GM23248 (cell line): ENCODE measurements at regions of chr3 and their contacts with region 1.

Region 1: GRCh38 chr3:120404876-120405275 is 45.9 kb downstream of the FSTL1 start:
- DNase-seq: peak; percentile 60
- H3K4me3 ChIP-seq: no peak overlapping the region
- H3K27ac ChIP-seq: peak overlapping the region; percentile 33
- H3K4me1 ChIP-seq: no peaks in the 10 kb centered on the region
- H3K27me3 ChIP-seq: no peaks in the 10 kb centered on the region

Region 2: GRCh38 chr3:120245386-120245785 is 159.5 kb before region 1 on chr3:
- in situ Hi-C with region 1: loop called (anchors 10 kb)
- DNase-seq: no peak
- H3K4me3 ChIP-seq: no peak overlapping the region
- H3K27ac ChIP-seq: no peak overlapping the region
- H3K4me1 ChIP-seq: no peaks in the 10 kb centered on the region
- H3K27me3 ChIP-seq: no peaks in the 10 kb centered on the region

Region 3: GRCh38 chr3:121781611-121782010 is 1376.7 kb after region 1 on chr3:
- in situ Hi-C with region 1: no loop called
- DNase-seq: no peak
- H3K4me3 ChIP-seq: no peak overlapping the region
- H3K27ac ChIP-seq: no peak overlapping the region
- H3K4me1 ChIP-seq: no peaks in the 10 kb centered on the region
- H3K27me3 ChIP-seq: no peaks in the 10 kb centered on the region